Activated CD4-positive, alpha-beta memory T cell treated with anti-CD3 and anti-CD28 coated beads for 36 hours (primary cell): ENCODE measurements at regions of chr20 and their contacts with region 1.

Region 1: DNA sequence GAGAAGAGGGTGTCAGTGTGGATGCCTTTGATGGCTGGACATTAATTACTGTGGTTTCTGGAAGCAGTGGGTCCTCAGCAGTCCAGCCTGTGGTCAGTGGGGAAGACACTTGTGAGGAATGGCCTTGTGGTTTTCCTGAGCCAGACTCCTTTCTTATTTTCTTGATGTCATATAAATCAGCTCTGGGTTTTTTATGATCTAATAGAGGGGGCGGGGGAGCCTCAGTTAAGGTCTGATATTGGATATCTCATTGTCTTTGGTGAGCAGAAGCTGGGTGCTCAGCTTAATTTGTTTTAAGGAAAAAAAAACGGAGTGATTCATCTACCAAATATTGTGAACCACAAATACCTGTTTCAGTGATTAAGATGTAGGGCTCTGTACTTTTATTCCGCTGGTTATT is 62.1 kb downstream of the OTOR start:
- DNase-seq: no peak
- H3K4me3 Mint-ChIP-seq: no peak overlapping the region
- H3K27ac Mint-ChIP-seq: no peak overlapping the region
- H3K4me1 Mint-ChIP-seq: no peaks in the 10 kb centered on the region
- H3K27me3 Mint-ChIP-seq: peaks cover 19% of the 10 kb centered on the region

Region 2: DNA sequence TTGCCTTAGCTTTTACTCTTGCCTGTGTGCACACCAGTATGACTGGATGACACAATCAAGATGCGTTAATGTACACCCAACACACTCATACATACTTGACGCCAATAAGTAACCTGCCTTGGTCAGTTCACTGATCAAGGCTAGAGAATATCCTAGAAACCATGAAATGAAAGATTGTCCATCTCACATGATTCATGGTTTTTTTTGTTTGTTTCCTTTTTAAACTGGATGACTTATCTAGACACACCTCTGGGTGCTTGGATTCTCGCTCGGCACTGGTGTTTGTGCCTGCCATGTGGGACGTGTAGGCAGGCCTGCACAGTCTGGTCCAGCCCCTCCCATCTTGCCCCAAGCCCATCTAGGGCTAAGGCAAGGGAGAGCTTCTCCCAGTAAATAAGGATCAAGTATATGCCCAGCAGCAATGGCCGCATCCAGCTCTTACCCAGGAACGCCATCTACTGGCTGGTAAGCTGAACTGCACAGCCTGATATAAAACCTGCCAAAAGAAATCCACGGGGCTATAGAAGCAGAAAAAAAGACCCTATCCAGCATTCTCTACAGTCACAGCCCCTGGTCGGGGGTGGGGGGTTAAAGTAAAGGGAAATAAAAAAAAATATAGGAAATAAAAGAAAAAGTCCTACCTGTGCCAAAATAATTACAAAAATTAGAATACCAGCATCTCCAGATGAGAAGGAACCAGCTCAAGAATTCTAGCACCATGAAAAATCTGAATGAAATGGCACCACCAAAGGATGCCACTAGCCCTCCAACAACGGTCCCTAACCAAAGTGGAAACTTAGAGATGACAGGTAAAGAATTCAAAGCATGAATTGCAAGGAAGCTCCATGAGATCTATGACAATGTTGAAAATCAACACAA is 11.2 kb after region 1 on chr20:
- CTCF ChIA-PET with region 1: interaction called, 159 read pairs
- POLR2A ChIA-PET with region 1: no interaction called
- intact Hi-C with region 1: no loop called
- DNase-seq: peak; percentile 35
- H3K4me3 Mint-ChIP-seq: no peak overlapping the region
- H3K27ac Mint-ChIP-seq: no peak overlapping the region
- H3K4me1 Mint-ChIP-seq: no peaks in the 10 kb centered on the region
- H3K27me3 Mint-ChIP-seq: peaks cover 16% of the 10 kb centered on the region